Mammary epithelial cell (primary cell): ENCODE measurements at regions of chr14 and their contacts with region 1.

Region 1: GRCh38 chr14:68939893-68940613 is 39.0 kb downstream of the ACTN1 start:
- DNase-seq: peak; percentile 92
- H3K4me3 ChIP-seq: no peak overlapping the region
- H3K27ac ChIP-seq: peak overlapping the region; percentile 64
- H3K4me1 ChIP-seq: peaks cover 96% of the 10 kb centered on the region
- H3K27me3 ChIP-seq: no peaks in the 10 kb centered on the region
- CTCF ChIP-seq: no peak

Region 2: GRCh38 chr14:68862954-68863594 is 77.0 kb before region 1 on chr14:
- CTCF ChIA-PET with region 1: no interaction called
- dilution Hi-C with region 1: no loop called
- in situ Hi-C with region 1: no loop called
- intact Hi-C with region 1: loop called (anchors 2 kb)
- DNase-seq: peak; percentile 59
- H3K4me3 ChIP-seq: no peak overlapping the region
- H3K27ac ChIP-seq: no peak overlapping the region
- H3K4me1 ChIP-seq: no peaks in the 10 kb centered on the region
- H3K27me3 ChIP-seq: no peaks in the 10 kb centered on the region
- CTCF ChIP-seq: peak; percentile 75 to 84

Region 3: GRCh38 chr14:68911594-68912227 is 28.3 kb before region 1 on chr14:
- CTCF ChIA-PET with region 1: interaction called, 3 read pairs
- dilution Hi-C with region 1: loop called (anchors 5 kb)
- in situ Hi-C with region 1: no loop called
- intact Hi-C with region 1: loop called (anchors 1 kb)
- DNase-seq: peak; percentile 65
- H3K4me3 ChIP-seq: no peak overlapping the region
- H3K27ac ChIP-seq: no peak overlapping the region
- H3K4me1 ChIP-seq: peaks cover 4% of the 10 kb centered on the region
- H3K27me3 ChIP-seq: no peaks in the 10 kb centered on the region
- CTCF ChIP-seq: peak; percentile 98 to 99

Region 4: DNA sequence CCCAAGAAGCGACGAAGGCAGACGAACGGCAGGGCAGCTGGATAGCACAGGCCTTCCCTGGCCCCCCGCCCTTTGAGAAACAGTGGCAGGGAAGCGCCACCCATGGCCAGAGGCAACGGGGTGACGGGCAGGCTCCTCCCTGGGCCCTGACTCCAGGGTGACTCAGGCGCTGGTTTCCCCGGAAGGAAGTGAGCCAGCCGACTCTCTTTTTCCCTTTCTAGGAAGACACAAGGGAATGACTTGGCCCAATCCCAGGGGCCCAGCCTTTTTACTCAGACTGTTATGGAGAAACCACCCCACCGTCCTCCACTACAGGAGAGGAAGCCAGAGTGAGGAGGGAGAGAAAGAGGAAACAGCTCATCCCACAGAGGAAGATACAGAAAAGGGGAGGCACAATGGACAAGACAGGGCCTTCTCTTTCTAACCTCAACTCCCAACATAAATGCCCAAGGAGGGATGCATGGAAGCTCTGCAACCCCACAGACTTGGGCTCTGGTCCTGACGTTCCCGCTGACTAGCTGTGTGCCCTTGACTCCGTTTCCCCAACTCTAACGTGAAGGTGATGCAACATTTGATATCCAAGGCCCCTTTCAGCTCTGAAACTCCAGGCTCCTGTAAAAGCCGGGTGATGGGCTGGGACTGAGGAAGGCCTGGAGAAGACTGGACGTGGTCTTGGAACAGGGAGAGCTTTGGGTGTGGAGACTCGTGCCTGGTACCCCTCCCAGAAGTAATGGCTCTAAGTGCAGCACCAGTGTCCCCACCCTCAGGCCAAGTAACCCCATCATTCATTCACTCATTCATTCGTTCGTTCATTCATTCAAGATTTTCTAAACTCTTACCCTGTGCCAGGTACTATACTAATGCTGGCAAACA is 11.2 kb after region 1 on chr14:
- CTCF ChIA-PET with region 1: interaction called, 5 read pairs
- dilution Hi-C with region 1: no loop called
- in situ Hi-C with region 1: no loop called
- intact Hi-C with region 1: loop called (anchors 1 kb)
- DNase-seq: peak; percentile 100
- H3K4me3 ChIP-seq: peak overlapping the region in 1 of 3 experiments; percentile 21
- H3K27ac ChIP-seq: peak overlapping the region; percentile 88
- H3K4me1 ChIP-seq: peaks cover 95% of the 10 kb centered on the region
- H3K27me3 ChIP-seq: no peaks in the 10 kb centered on the region
- CTCF ChIP-seq: no peak

Region 5: GRCh38 chr14:68979021-68979782 is 39.1 kb after region 1 on chr14 and contains the start of gene ACTN1:
- CTCF ChIA-PET with region 1: interaction called, 5 read pairs
- dilution Hi-C with region 1: no loop called
- in situ Hi-C with region 1: no loop called
- intact Hi-C with region 1: loop called (anchors 1 kb)
- DNase-seq: peak; percentile 98
- H3K4me3 ChIP-seq: peak within 1 kb of the TSS; percentile 86 to 96 (median 96)
- H3K27ac ChIP-seq: peak within 1 kb of the TSS; percentile 85
- H3K4me1 ChIP-seq: peaks cover 45% of the 10 kb centered on the region
- H3K27me3 ChIP-seq: no peaks in the 10 kb centered on the region
- CTCF ChIP-seq: no peak
- total RNA-seq, gene ACTN1: 841 to 1,322 TPM

Region 6: GRCh38 chr14:69101331-69101826 is 161.3 kb after region 1 on chr14:
- CTCF ChIA-PET with region 1: no interaction called
- dilution Hi-C with region 1: no loop called
- in situ Hi-C with region 1: loop called in 1 of 2 experiments (anchors 10 kb)
- intact Hi-C with region 1: loop called (anchors 2 kb)
- DNase-seq: peak; percentile 75
- H3K4me3 ChIP-seq: no peak overlapping the region
- H3K27ac ChIP-seq: peak overlapping the region; percentile 65
- H3K4me1 ChIP-seq: peaks cover 18% of the 10 kb centered on the region
- H3K27me3 ChIP-seq: no peaks in the 10 kb centered on the region
- CTCF ChIP-seq: peak; percentile 59 to 76

Region 7: DNA sequence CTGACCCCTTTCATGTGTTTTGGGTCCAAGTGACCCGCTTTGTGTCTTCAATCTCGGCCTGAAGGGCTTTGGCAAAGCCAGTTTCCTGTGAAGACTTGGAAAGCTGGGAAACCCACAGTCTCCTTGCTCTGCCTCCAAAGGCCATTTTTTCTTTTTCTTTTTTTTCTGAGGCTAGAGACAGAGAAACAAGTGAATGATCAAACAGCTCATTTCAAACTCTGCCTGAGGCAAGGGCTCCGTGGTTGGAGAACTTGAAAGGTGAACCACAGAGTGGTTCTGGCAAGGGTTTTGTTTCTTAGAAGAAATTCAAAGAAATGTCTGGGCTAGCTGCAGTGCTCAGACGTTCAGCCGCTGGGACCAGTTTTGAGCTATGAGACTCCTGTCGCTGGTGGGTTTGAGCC is 395.3 kb after region 1 on chr14:
- CTCF ChIA-PET with region 1: no interaction called
- dilution Hi-C with region 1: no loop called
- in situ Hi-C with region 1: no loop called
- intact Hi-C with region 1: no loop called
- DNase-seq: peak; percentile 82
- H3K4me3 ChIP-seq: no peak overlapping the region
- H3K27ac ChIP-seq: no peak overlapping the region
- H3K4me1 ChIP-seq: peaks cover 4% of the 10 kb centered on the region
- H3K27me3 ChIP-seq: no peaks in the 10 kb centered on the region
- CTCF ChIP-seq: no peak